Colonic mucosa (tissue), 4 donors: ENCODE measurements at regions of chr19 and their contacts with region 1.

Region 1: DNA sequence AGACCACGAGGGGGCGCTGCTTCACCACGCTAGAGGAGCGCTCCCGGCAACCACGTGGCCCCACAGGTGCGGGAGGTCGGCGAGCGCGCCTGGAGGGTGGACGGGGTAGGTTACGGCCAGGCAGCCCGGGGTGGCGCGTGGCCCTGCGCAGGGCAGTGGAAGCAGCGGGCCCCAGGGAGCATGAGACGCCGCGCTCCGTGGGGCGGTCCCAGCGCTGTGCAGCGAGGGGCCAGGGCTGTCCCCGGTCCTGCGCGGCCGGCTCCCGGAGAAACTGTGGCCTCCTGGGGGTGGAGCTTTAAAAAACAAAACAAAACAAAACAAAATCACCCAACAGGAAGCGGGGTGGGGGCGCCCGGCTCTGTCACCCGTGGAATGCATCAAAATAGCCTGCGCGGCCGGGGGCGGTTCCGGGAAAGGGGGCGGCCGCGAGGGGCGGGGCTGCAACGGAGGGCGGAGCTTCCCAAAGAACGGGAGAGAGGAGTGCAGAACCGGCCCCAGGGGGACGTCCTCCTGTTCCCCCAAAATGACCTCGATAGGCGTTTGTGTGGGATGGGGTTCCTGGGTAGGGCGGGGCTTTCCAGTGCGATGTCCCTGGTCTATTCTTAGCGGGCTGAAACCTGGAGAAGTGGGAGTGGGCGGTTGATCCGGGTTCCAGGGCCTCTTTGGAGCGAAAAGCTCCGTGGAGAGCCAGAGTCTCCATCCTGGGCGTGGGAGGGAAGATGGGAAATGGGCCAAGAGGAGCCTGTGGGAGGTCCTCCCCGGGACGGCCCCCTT is 27.3 kb downstream of the NUMBL start:
- DNase-seq: peak; percentile 91
- H3K4me3 ChIP-seq: peak overlapping the region; percentile 57
- H3K27ac ChIP-seq: peak overlapping the region; percentile 65
- H3K4me1 ChIP-seq: no peaks in the 10 kb centered on the region
- H3K27me3 ChIP-seq: no peaks in the 10 kb centered on the region
- CTCF ChIP-seq: peak; percentile 97

Region 2: GRCh38 chr19:40529093-40529954 is 133.8 kb before region 1 on chr19:
- intact Hi-C with region 1: no loop called
- DNase-seq: peak; percentile 83
- H3K4me3 ChIP-seq: peak overlapping the region; percentile 48
- H3K27ac ChIP-seq: no peak overlapping the region
- H3K4me1 ChIP-seq: no peaks in the 10 kb centered on the region
- H3K27me3 ChIP-seq: no peaks in the 10 kb centered on the region
- CTCF ChIP-seq: peak; percentile 85

Region 3: DNA sequence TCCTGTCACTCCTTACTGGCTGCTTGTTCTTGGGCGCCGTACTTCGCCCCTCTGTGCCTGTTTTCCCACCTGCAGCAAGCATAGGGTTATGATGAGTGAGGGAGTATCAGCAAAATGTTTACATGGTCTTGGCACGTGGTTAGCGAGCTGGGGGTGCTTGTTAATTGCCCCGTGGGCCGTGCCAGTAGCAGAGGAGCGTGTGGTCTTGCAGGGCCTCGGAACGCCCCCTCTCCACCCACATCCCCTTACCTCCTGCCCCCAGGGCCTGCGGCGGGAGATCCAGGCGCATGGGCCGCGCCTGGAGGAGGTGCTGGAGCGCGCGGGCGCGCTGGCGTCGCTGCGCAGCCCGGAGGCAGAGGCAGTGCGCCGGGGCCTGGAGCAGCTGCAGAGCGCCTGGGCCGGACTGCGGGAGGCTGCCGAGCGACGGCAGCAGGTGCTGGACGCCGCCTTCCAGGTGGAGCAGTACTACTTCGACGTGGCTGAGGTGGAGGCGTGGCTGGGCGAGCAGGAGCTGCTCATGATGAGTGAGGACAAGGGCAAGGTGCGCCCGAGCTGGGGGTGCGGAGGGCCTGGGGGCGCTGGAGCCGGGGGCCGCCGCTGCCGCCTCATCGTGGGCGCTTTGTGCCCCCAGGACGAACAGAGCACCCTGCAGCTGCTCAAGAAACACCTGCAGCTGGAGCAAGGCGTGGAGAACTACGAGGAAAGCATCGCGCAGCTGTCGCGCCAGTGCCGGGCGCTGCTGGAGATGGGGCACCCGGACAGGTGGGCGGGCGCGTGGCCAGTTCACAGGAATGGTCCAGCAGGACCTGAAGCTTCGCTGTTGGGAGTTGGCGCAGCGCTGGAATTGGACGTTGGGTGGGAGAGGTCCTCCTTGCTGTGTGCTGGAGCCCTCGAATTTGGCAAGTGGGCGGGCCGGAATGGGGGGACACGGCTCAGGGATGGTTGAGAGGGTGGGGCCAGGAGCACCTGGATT is 108.9 kb before region 1 on chr19:
- intact Hi-C with region 1: no loop called
- DNase-seq: no peak
- H3K4me3 ChIP-seq: no peak overlapping the region
- H3K27ac ChIP-seq: no peak overlapping the region
- H3K4me1 ChIP-seq: no peaks in the 10 kb centered on the region
- H3K27me3 ChIP-seq: peaks cover 14% of the 10 kb centered on the region
- CTCF ChIP-seq: no peak

Region 4: DNA sequence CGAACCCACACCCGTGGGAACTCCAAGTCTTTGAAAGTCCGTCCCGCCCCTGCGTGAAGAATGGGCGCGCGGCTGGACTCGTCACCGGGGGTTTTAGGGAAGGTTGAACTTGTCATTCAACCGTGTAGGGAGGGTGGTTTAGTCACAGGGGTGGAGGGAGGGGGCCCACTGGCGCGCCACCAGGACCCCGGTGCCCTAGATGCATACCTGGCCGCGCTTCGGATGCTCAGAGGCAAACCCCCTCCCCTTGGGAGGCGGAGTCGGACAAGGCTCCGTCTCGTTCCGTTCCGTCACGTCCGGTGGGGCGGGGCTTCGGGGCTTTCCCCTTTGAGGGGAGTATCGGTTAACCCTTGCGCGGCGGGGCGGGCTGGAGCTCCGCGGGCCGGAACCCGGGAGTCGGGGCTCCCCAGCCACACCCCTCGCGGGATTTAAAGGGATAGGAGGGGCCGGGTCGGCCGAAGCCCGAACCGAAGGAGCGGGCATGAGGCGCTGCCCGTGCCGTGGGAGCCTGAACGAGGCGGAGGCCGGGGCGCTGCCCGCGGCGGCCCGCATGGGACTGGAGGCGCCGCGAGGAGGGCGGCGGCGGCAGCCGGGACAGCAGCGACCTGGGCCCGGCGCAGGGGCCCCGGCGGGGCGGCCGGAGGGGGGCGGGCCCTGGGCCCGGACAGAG is 53.7 kb after region 1 on chr19 and contains the starts of genes COQ8B and ITPKC:
- intact Hi-C with region 1: no loop called
- DNase-seq: peak; percentile 100
- H3K4me3 ChIP-seq: peak within 1 kb of the TSS; percentile 59
- H3K27ac ChIP-seq: peak within 1 kb of the TSS; percentile 78
- H3K4me1 ChIP-seq: peaks cover 12% of the 10 kb centered on the region
- H3K27me3 ChIP-seq: no peaks in the 10 kb centered on the region
- CTCF ChIP-seq: no peak
- total RNA-seq, gene COQ8B: 26.5 to 48.5 TPM
- total RNA-seq, gene ITPKC: 15.8 to 22.0 TPM

Region 5: GRCh38 chr19:40822161-40822560 is 159.1 kb after region 1 on chr19:
- intact Hi-C with region 1: loop called (anchors 2 kb)
- DNase-seq: peak; percentile 17
- H3K4me3 ChIP-seq: no peak overlapping the region
- H3K27ac ChIP-seq: no peak overlapping the region
- H3K4me1 ChIP-seq: peaks cover 3% of the 10 kb centered on the region
- H3K27me3 ChIP-seq: no peaks in the 10 kb centered on the region
- CTCF ChIP-seq: no peak

Region 6: GRCh38 chr19:40908976-40909375 is 245.9 kb after region 1 on chr19:
- intact Hi-C with region 1: loop called (anchors 5 kb)
- DNase-seq: no peak
- H3K4me3 ChIP-seq: no peak overlapping the region
- H3K27ac ChIP-seq: no peak overlapping the region
- H3K4me1 ChIP-seq: no peaks in the 10 kb centered on the region
- H3K27me3 ChIP-seq: no peaks in the 10 kb centered on the region
- CTCF ChIP-seq: no peak

Region 7: GRCh38 chr19:41144403-41144802 is 481.3 kb after region 1 on chr19:
- intact Hi-C with region 1: loop called (anchors 5 kb)
- DNase-seq: peak; percentile 94
- H3K4me3 ChIP-seq: no peak overlapping the region
- H3K27ac ChIP-seq: no peak overlapping the region
- H3K4me1 ChIP-seq: no peaks in the 10 kb centered on the region
- H3K27me3 ChIP-seq: no peaks in the 10 kb centered on the region
- CTCF ChIP-seq: peak; percentile 81